BJ (cell line): ENCODE measurements at regions of chr2 and their contacts with region 1.

Region 1: GRCh38 chr2:26088032-26088643 is 54.3 kb downstream of the RAB10 start:
- DNase-seq: no peak
- H3K4me3 ChIP-seq: no peak overlapping the region
- H3K27me3 ChIP-seq: no peaks in the 10 kb centered on the region
- CTCF ChIP-seq: peak; percentile 69

Region 2: DNA sequence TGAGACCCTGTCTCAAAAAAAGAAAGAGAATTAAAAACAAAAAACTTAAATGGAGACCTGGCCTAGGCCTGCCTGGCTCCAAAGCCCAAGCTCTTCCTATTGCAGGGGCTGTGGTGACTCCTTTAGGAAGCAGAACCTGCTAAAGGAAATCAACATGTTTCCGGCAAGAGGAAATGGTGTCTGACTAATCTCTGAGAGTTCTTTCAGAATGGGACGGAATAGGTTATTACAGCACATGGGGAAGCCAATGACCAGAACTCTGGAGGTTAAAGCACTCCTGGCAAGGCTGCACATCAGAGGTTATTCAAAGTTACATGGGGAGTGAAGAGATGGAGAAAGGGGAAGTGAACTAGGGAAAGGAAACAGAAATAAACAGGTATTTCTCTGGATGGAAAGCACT is 127.2 kb before region 1 on chr2:
- CTCF ChIA-PET with region 1: no interaction called
- POLR2A ChIA-PET with region 1: no interaction called
- DNase-seq: no peak
- H3K4me3 ChIP-seq: no peak overlapping the region
- H3K27me3 ChIP-seq: no peaks in the 10 kb centered on the region
- CTCF ChIP-seq: no peak

Region 3: DNA sequence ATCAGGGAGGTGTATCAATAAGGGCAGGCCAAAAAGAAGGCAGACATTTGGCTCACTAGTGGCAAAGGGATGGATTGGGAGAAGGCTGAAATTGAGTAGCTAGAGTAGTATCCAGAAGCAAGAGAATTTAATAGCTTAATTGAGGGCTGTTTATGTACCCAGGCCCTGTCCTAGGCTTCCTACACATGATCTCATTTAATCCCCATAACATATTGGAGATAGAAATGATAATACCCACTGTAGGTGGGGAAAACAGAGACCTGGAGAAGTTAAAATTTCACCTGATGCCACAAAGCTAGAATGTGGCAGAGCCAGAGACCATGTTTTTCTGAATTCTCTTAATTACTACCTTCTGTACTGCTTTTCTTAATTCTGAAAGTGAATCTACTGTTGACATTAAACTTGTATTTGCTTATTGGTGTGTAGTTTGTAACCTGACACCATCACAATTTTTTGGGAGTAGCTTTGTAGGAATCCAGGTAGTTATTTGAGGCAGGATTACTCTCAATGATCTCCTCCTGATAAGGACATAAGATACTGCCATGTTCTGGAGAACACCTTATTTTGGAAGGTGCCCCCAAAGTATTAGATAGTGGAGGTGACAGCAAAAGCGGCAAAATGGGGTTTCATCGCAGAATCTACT is 12.1 kb before region 1 on chr2:
- CTCF ChIA-PET with region 1: interaction called, 18 read pairs
- POLR2A ChIA-PET with region 1: no interaction called
- DNase-seq: no peak
- H3K4me3 ChIP-seq: no peak overlapping the region
- H3K27me3 ChIP-seq: no peaks in the 10 kb centered on the region
- CTCF ChIP-seq: no peak

Region 4: GRCh38 chr2:26223018-26223417 is 134.9 kb after region 1 on chr2:
- CTCF ChIA-PET with region 1: no interaction called
- POLR2A ChIA-PET with region 1: no interaction called
- DNase-seq: no peak
- H3K4me3 ChIP-seq: no peak overlapping the region
- H3K27me3 ChIP-seq: no peaks in the 10 kb centered on the region
- CTCF ChIP-seq: no peak

Region 5: DNA sequence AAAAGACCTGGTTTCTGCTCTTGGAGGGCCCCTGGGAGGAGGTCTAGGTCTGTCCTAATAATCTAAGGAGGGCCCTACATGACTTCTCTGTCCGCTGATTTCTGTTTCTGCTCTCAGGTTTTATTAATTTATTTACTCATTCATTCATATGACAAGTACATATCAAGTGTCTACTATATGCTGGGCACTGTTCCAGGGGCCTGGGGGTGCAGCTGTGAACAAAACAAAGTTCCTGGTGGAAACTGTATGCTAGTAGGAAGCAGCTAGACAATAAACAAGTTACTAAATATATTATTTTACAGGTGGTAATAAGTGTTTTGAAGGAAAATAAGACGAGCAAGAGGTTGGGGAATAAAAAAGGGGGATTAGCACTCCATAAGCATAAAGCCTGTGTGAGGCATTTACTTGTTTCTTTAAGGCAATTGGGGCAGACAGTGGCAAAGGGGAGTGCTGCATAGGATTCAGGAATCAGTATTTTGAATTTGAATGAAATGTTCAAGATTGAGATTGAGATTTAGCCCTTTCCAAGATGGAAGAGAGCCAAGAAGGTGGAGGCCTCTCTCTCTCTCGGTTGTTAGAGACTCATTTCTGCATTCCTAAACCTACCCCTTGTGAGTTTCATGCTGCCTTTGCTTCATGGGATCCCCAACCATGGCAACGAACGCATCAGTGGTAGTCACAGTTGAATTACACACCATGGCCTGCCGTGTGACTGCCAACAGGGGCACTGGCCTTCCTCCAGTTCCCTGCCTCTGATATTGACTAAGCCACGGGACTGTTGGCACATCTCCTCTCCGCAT is 341.8 kb after region 1 on chr2:
- CTCF ChIA-PET with region 1: no interaction called
- POLR2A ChIA-PET with region 1: no interaction called
- DNase-seq: no peak
- H3K4me3 ChIP-seq: no peak overlapping the region
- H3K27me3 ChIP-seq: peaks cover 3% of the 10 kb centered on the region; the same call in 1 of the 2 replicates
- CTCF ChIP-seq: no peak